ENCODE measurements at regions of chr7 and their contacts with region 1.

Region 1: GRCh38 chr7:156949541-156950380 is at the start of gene NOM1:
- DNase-seq: peak; percentile 96 to 97 (median 96)
- ATAC-seq: peak; percentile 89
- H3K4me3 ChIP-seq: peak within 1 kb of the TSS; percentile 95
- H3K27ac ChIP-seq: peak within 1 kb of the TSS; percentile 85
- H3K4me1 ChIP-seq: peaks cover 20 to 25% of the 10 kb centered on the region in 2 experiments; a peak in 4 of 5 replicates
- H3K27me3 ChIP-seq: peaks cover 2 to 4% of the 10 kb centered on the region in 2 experiments
- CTCF ChIP-seq: peak; percentile 71 to 93 (median 90)
- EP300 ChIP-seq: no peak; the same call in 1 of the 2 replicates
- POLR2A ChIP-seq: peak; percentile 94
- RAD21 ChIP-seq: peak in 1 of 2 experiments; percentile 55; a peak in 3 of 4 replicates
- polyA plus RNA-seq, gene NOM1: 6.8 to 9.6 TPM

Region 2: GRCh38 chr7:156964971-156965370 is 15.2 kb after region 1 on chr7:
- CTCF ChIA-PET with region 1: no interaction called
- POLR2A ChIA-PET with region 1: interaction called, 10 read pairs
- in situ Hi-C with region 1: no loop called
- intact Hi-C with region 1: no loop called
- DNase-seq: no peak
- ATAC-seq: no peak
- H3K4me3 ChIP-seq: no peak overlapping the region
- H3K27ac ChIP-seq: no peak overlapping the region
- H3K4me1 ChIP-seq: no peaks in the 10 kb centered on the region
- H3K27me3 ChIP-seq: no peaks in the 10 kb centered on the region
- CTCF ChIP-seq: no peak
- EP300 ChIP-seq: no peak
- POLR2A ChIP-seq: 0 out of 2 replicates have a peak, but pooled peaks have one; percentile 4
- RAD21 ChIP-seq: no peak